ENCODE measurements at regions of chr3 and their contacts with region 1.

Region 1: GRCh38 chr3:187738331-187739093 is 6.8 kb downstream of the BCL6 start:
- DNase-seq: peak; percentile 53 to 90 (median 84)
- H3K4me3 ChIP-seq: peak overlapping the region; percentile 55 to 98 (median 84)
- H3K27ac ChIP-seq: peak overlapping the region; percentile 43 to 100 (median 99)
- H3K27me3 ChIP-seq: no peaks in the 10 kb centered on the region
- CTCF ChIP-seq: peak; percentile 59 to 89 (median 79)

Region 2: GRCh38 chr3:187587076-187587475 is 151.4 kb before region 1 on chr3:
- intact Hi-C with region 1: no loop called
- DNase-seq: no peak
- H3K4me3 ChIP-seq: no peak overlapping the region
- H3K27ac ChIP-seq: no peak overlapping the region
- H3K27me3 ChIP-seq: no peaks in the 10 kb centered on the region
- CTCF ChIP-seq: no peak

Region 3: DNA sequence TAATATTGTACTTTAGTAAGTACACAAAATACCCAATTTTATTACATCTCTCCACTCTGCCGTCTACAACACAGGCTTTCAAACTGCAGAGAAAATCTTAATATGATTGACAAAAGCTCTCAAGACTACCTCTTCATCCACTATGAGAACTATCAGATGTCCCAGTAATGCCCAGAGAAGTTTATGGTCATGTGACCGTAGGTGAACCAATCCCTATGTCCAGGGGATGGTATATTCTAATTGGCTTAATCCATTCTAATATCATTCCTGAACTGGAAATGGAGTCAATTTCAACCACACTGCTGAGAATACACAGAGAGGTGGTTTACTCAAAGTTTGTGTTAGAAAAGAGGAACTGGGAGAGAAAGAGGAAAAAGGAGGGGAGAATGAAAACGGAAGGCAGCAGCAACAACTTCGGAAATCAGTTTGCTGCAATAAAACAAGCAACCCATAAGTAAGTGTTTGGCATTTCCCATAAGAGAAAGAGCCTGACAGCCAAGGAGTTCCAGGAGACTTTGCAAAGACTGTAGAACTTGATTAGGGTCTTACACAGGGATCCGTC is 75.6 kb before region 1 on chr3:
- intact Hi-C with region 1: no loop called
- DNase-seq: no peak
- H3K4me3 ChIP-seq: no peak overlapping the region
- H3K27ac ChIP-seq: no peak overlapping the region
- H3K27me3 ChIP-seq: peaks cover 0 to 14% (median 0%) of the 10 kb centered on the region in 45 donors
- CTCF ChIP-seq: no peak

Region 4: DNA sequence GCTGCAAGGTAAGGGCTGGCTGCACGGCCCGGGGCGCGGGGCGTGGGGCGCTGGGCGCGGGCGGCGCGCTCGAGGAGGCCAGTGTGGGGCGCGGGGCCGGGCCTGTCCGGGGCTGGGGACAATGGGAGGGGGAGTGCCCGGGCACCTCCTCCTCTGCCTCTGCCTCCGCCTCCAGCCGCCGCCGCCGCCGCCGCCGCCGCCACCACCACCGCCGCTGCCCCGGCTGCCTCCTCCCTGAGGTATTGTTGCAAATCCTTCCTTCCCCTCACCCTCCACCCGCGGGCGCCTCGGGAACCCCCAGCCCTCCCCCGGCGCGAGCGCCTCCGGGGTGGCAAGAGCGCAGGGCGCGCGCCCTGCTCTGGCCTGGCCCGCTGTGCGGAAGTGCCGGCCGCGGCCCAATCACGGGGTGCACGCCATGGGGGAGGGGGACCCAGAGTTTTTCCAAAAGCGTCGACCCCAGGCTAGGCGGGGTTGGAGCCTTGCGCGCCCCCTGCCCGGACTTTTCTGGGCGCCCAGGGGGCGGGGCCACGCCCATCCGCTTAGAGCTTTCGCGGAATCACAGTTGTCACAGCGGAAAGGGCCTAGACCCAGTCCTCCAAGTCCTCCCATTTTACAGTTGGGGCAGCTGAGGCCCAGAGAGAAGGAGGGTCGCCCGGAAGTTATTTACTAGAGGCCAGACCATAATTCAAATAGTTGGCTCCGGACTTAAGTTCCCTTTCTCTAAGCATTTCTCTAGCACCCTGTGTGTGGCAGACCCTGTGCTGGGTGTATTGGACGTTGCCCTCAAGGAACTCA is 415.7 kb after region 1 on chr3 and contains the start of gene LPP:
- intact Hi-C with region 1: loop called (anchors 5 kb)
- DNase-seq: peak; percentile 28 to 81 (median 54)
- H3K4me3 ChIP-seq: peak within 1 kb of the TSS; percentile 63 to 94 (median 84)
- H3K27ac ChIP-seq: peak within 1 kb of the TSS; percentile 35 to 94 (median 83)
- H3K27me3 ChIP-seq: no peaks in the 10 kb centered on the region
- CTCF ChIP-seq: peak in 21 of 56 donors; percentile 4 to 35 (median 14)
- total RNA-seq, gene LPP: 32.7 to 187 (median 61.2) TPM

Region 5: DNA sequence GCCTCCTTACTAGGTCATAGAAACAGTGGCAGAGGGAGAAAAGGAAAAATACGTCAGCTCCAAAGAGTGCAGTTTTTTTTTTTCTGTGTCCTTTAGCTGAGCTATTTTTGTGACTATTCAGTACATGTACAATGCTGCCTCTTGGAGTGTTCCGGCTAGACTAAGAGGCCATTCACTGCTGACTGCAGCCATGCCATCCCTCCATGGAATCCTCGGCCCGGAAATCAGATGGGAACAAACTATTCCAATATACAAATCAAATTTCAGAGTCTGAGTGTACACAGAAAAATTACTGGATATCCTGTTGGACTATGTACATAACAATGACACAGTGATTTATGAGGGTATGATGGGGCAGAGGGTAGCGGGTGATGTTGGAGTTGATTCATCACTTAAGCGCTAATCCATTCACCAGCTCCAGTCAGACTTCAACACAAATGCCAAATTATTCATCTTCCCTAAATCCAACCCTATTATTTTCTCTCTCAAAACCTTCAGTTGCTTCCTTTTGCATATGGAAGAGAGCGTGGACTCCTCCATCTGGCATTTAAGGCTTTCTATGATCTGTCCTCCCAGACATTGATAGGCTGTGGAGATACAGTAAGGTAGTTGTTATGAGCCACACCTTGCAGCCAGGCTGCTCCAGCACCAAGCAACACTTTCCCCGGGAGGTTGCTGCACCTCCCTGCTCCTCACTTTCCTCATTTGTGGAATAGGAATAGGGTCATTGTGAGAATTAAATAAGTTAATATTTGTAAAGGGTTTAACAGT is 524.6 kb after region 1 on chr3:
- intact Hi-C with region 1: loop called in 1 of 2 experiments (anchors 5 kb)
- DNase-seq: peak in 6 of 10 donors; percentile 52 to 76 (median 60)
- H3K4me3 ChIP-seq: peak overlapping the region in 26 of 59 donors; percentile 2 to 50 (median 18)
- H3K27ac ChIP-seq: peak overlapping the region; percentile 27 to 95 (median 82)
- H3K27me3 ChIP-seq: no peaks in the 10 kb centered on the region
- CTCF ChIP-seq: peak in 18 of 56 donors; percentile 6 to 41 (median 20)

Region 6: GRCh38 chr3:188954590-188955208 is 1216.2 kb after region 1 on chr3:
- intact Hi-C with region 1: loop called in 1 of 2 experiments (anchors 1 kb)
- DNase-seq: peak; percentile 68 to 90 (median 84)
- H3K4me3 ChIP-seq: no peak overlapping the region
- H3K27ac ChIP-seq: peak overlapping the region in 45 of 59 donors; percentile 0 to 98 (median 51)
- H3K27me3 ChIP-seq: no peaks in the 10 kb centered on the region
- CTCF ChIP-seq: peak; percentile 82 to 99 (median 98)

Region 7: DNA sequence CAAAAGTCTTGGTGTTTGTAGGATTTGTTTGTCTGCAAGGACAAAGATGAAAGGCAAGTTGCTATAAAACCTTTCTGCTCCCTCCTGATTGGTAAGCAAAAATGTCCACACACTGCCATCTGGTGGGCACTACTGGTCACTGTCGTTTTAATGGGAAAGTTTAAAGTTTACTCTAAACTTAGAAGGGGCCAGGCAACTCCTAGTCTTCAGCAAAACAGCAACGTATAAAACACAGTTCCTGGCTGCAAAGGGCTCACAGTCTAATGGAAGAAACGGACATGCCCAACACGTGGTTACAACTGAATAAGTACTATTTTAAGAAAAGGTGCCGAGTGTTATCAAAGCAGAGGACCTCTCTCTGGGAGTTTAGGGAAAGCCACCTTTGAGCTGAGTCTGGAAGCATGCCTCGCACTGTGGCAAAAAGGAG is 1409.6 kb after region 1 on chr3:
- intact Hi-C with region 1: loop called (anchors 1 kb)
- DNase-seq: peak in 9 of 10 donors; percentile 27 to 67 (median 49)
- H3K4me3 ChIP-seq: no peak overlapping the region
- H3K27ac ChIP-seq: peak overlapping the region in 4 of 59 donors; percentile 5 to 32 (median 14)
- H3K27me3 ChIP-seq: peaks cover 0 to 2% (median 0%) of the 10 kb centered on the region in 45 donors
- CTCF ChIP-seq: peak; percentile 68 to 95 (median 86)

Region 8: DNA sequence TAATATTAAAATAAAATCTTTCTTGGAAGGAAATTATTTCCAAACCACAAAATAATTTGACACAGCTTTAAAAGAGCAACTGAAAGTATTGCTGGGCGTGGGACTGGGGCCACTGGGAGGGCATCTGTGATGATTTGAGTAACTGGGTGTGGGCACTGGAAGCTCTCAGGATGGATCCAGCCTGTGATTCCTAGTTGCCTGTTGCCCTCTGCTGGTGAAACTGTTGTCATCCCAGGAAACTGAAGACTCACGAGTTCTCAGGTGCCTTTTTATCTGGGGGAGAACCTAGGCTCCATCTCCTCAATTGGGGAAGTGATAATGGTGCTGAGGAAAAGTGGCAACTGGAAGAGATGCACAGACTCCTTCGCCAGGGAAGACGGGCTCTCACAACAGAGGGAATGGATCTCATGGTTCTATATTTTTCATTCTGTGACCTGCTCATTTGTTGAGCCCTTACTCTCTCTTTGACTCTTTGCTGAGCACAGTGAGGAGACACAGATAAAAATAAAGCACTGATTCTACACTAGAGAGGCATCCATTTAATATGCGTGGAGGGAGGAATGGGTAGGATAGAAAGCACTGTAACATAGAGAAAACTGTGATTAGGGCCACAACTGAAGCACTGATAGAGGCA is 1494.8 kb after region 1 on chr3:
- intact Hi-C with region 1: loop called in 1 of 2 experiments (anchors 5 kb)
- DNase-seq: peak in 9 of 10 donors; percentile 28 to 79 (median 54)
- H3K4me3 ChIP-seq: no peak overlapping the region
- H3K27ac ChIP-seq: no peak overlapping the region
- H3K27me3 ChIP-seq: no peaks in the 10 kb centered on the region
- CTCF ChIP-seq: peak in 55 of 56 donors; percentile 33 to 78 (median 63)